Common myeloid progenitor, CD34-positive (primary cell): ENCODE measurements at regions of chr17 and their contacts with region 1.

Region 1: GRCh38 chr17:18187821-18188761 is 4.5 kb downstream of the ALKBH5 start:
- DNase-seq: peak in 2 of 3 donors; percentile 29 to 44
- H3K4me3 ChIP-seq: peak overlapping the region in 3 of 7 experiments; percentile 83 to 89 (median 86)
- H3K27ac ChIP-seq: peak overlapping the region in 1 of 2 experiments; percentile 49
- H3K4me1 ChIP-seq: peaks cover 26 to 56% (median 50%) of the 10 kb centered on the region in 4 experiments
- H3K27me3 ChIP-seq: no peaks in the 10 kb centered on the region

Region 2: GRCh38 chr17:17950806-17951205 is 237.3 kb before region 1 on chr17:
- CTCF ChIA-PET with region 1: no interaction called
- POLR2A ChIA-PET with region 1: no interaction called
- DNase-seq: no peak
- H3K4me3 ChIP-seq: no peak overlapping the region
- H3K27ac ChIP-seq: no peak overlapping the region
- H3K4me1 ChIP-seq: no peaks in the 10 kb centered on the region
- H3K27me3 ChIP-seq: no peaks in the 10 kb centered on the region

Region 3: DNA sequence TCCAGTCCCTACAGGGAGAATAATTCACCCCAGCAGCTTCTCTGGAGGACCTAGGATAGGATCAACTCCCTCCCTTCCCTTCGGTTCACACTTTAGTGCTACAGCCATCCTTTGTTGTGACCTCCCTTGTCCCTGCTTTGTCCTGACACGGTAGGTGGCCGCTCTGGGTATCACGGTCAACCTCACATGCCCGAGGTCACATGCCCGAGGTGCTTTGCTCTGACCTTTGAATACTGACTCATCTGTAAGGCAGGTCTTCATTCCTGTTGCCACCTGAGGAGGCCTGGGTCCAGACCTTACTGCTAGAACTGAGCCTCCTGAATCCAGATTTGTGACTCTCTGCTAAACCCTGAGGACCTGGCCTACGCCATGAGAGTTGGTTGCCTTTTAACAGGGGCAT is 15.2 kb after region 1 on chr17:
- CTCF ChIA-PET with region 1: interaction called, 11 read pairs
- POLR2A ChIA-PET with region 1: interaction called, 4 read pairs
- DNase-seq: no peak
- H3K4me3 ChIP-seq: no peak overlapping the region
- H3K27ac ChIP-seq: no peak overlapping the region
- H3K4me1 ChIP-seq: no peaks in the 10 kb centered on the region
- H3K27me3 ChIP-seq: no peaks in the 10 kb centered on the region